Psoas muscle (tissue), 8 donors: ENCODE measurements at regions of chr5 and their contacts with region 1.

Region 1: DNA sequence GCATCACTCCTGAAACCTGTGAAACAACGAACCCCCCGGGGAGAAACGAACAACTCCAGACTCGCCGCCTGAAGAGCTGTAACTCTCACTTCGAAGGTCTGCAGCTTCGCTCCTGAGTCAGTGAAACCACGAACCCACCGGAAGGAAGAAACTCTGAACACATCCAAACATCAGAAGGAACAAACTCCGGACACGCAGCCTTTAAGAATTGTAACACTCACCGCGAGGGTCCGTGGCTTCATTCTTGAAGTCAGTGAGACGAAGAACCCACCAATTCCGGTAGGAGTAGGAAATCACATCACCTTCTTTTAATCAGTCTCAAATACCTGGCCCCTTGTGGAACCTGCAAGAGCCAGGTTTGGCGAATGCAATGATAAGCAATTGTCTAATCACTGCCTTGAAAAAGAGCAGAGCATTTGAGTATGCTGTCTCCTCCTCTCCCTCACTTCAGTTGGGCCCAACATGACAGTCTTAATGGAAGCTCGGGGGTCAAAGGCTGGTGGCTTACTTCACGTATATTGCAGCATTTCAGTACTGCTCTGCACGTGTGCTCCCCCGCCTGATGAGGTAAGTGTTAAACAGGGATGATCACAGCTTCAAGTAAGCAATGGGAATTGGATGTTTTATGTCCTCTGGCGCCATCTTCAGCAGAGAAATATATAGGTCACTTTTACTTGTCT is 473 bp downstream of the IRGM start:
- DNase-seq: no peak
- ATAC-seq: peak; percentile 82 to 90 (median 84)
- H3K4me3 ChIP-seq: no peak overlapping the region
- H3K27ac ChIP-seq: no peak overlapping the region
- H3K4me1 ChIP-seq: no peaks in the 10 kb centered on the region
- H3K27me3 ChIP-seq: no peaks in the 10 kb centered on the region
- CTCF ChIP-seq: peak; percentile 63

Region 2: DNA sequence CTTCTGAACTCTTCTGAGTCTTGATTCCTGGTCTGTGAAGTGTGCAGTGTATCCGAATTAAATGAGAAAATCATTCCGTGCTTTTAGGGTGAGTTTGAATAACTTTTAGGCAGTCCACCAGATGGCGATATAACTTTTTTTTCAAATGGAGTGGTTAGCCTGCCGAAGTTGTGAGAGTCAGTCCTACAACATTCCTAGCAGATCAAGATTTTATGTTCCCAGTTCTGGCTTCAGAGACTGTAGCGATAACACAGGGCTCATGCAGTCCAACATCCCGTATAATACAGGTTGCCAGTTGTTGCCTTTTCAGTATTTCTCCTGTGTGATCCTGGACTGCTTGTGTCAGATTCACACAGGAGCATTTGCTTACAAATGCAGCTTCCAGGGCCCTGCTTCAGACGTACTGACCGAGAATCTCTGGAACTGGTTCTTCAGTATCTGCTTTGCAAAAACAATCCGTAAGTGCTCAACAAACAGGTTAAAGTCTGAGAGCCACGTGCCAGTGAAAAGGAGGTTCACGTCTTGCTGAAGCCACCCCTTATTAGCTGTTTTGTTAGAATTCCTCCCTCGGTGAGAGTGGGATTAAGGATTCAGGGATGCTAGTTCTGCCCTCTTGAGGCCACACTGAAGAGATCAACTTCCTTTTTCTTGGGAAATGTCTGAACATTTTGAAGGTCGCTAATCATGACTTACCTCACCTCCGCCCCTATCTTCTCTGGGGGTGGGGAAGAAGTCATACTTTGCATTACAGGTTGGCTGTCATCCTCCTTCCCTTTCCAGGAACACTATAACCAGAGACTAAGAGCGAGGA is 45.5 kb before region 1 on chr5:
- intact Hi-C with region 1: loop called (anchors 2 to 5 kb)
- DNase-seq: no peak
- ATAC-seq: peak; percentile 63 to 90 (median 75)
- H3K4me3 ChIP-seq: peak overlapping the region; percentile 46
- H3K27ac ChIP-seq: no peak overlapping the region
- H3K4me1 ChIP-seq: no peaks in the 10 kb centered on the region
- H3K27me3 ChIP-seq: peaks cover 0 to 6% (median 0%) of the 10 kb centered on the region in 3 donors
- CTCF ChIP-seq: peak; percentile 61